ENCODE measurements at regions of chr17 and their contacts with region 1.

Region 1: GRCh38 chr17:34408439-34408838 is 45.4 kb upstream of the CCL1 start:
- DNase-seq: no peak
- H3K4me3 Mint-ChIP-seq: no peak overlapping the region
- H3K27ac Mint-ChIP-seq: no peak overlapping the region
- H3K4me1 Mint-ChIP-seq: no peaks in the 10 kb centered on the region
- H3K27me3 Mint-ChIP-seq: peaks cover 91% of the 10 kb centered on the region
- CTCF ChIP-seq: no peak

Region 2: GRCh38 chr17:34465789-34466188 is 57.4 kb after region 1 on chr17:
- CTCF ChIA-PET with region 1: no interaction called
- intact Hi-C with region 1: no loop called
- DNase-seq: no peak
- H3K4me3 Mint-ChIP-seq: no peak overlapping the region
- H3K27ac Mint-ChIP-seq: no peak overlapping the region
- H3K4me1 Mint-ChIP-seq: no peaks in the 10 kb centered on the region
- H3K27me3 Mint-ChIP-seq: no peaks in the 10 kb centered on the region
- CTCF ChIP-seq: no peak

Region 3: GRCh38 chr17:35097776-35098175 is 689.3 kb after region 1 on chr17:
- CTCF ChIA-PET with region 1: interaction called, 11 read pairs
- intact Hi-C with region 1: no loop called
- DNase-seq: no peak
- H3K4me3 Mint-ChIP-seq: no peak overlapping the region
- H3K27ac Mint-ChIP-seq: no peak overlapping the region
- H3K4me1 Mint-ChIP-seq: no peaks in the 10 kb centered on the region
- H3K27me3 Mint-ChIP-seq: no peaks in the 10 kb centered on the region
- CTCF ChIP-seq: no peak

Measured in Calu3 (cell line).